ENCODE measurements at regions of chr2 and their contacts with region 1.

Region 1: GRCh38 chr2:229273723-229274338 is 2.7 kb upstream of the PID1 start:
- DNase-seq: peak in 1 of 2 donors; percentile 13
- ATAC-seq: peak; percentile 75 to 81
- H3K4me3 ChIP-seq: peak overlapping the region in 3 of 4 donors; percentile 26 to 42 (median 34)
- H3K27ac ChIP-seq: peak overlapping the region in 1 of 4 donors; percentile 54
- H3K4me1 ChIP-seq: peaks cover 0 to 3% of the 10 kb centered on the region in 2 donors
- H3K27me3 ChIP-seq: no peaks in the 10 kb centered on the region
- CTCF ChIP-seq: peak in 4 of 5 experiments; percentile 18 to 67 (median 48)
- POLR2A ChIP-seq: no peak

Region 2: DNA sequence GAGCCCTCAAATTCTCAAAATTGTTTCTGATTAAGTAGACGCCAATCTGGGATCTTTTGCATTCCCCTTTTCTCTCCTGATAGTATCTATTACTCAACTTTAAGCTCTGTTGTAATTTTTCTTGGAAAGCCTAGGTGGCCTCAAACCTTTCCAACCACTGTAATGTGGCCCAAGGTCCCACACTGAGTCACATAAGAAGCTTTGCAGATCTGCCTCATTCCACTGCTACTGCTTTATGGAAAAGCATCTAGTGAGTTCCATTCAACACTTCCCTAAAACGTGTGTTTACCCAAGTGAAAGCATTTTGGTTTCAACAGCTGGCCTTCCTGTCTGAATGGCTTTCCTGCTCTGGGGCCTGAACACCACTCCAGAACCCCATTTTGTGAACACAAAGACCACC is 598.7 kb before region 1 on chr2:
- in situ Hi-C with region 1: loop called in 1 of 4 experiments (anchors 10 kb)
- intact Hi-C with region 1: no loop called
- DNase-seq: peak; percentile 18 to 41
- ATAC-seq: peak; percentile 74 to 77
- H3K4me3 ChIP-seq: no peak overlapping the region
- H3K27ac ChIP-seq: peak overlapping the region in 3 of 4 donors; percentile 22 to 48 (median 39)
- H3K4me1 ChIP-seq: no peaks in the 10 kb centered on the region
- H3K27me3 ChIP-seq: no peaks in the 10 kb centered on the region
- CTCF ChIP-seq: no peak
- POLR2A ChIP-seq: no peak

Region 3: DNA sequence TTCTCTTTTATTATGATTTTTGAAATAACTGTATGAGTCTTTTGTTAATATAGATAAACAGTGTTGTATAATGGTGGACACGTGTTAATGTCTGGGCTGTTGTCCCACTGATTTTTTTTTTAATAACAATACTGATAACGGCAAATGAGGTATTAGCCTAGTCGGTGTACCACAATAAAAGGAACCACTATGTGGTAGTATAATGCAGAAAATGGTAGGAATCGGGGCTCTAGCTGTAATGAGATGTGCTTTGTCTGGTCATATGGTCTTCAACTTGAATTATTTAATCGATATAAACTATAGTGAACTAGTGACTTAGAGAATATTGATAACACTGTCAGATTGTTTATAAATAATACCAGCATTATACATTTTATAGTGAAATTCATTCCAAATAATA is 574.4 kb before region 1 on chr2:
- in situ Hi-C with region 1: loop called in 1 of 4 experiments (anchors 10 kb)
- intact Hi-C with region 1: loop called (anchors 10 kb)
- DNase-seq: no peak
- ATAC-seq: no peak
- H3K4me3 ChIP-seq: no peak overlapping the region
- H3K27ac ChIP-seq: no peak overlapping the region
- H3K4me1 ChIP-seq: no peaks in the 10 kb centered on the region
- H3K27me3 ChIP-seq: no peaks in the 10 kb centered on the region
- CTCF ChIP-seq: no peak
- POLR2A ChIP-seq: no peak

Region 4: GRCh38 chr2:229133155-229133772 is 140.6 kb before region 1 on chr2:
- in situ Hi-C with region 1: loop called in 2 of 4 experiments (anchors 5 to 10 kb)
- intact Hi-C with region 1: loop called (anchors 1 kb)
- DNase-seq: no peak
- ATAC-seq: peak in 1 of 2 donors; percentile 58
- H3K4me3 ChIP-seq: no peak overlapping the region
- H3K27ac ChIP-seq: no peak overlapping the region
- H3K4me1 ChIP-seq: peaks cover 0 to 5% of the 10 kb centered on the region in 2 donors
- H3K27me3 ChIP-seq: no peaks in the 10 kb centered on the region
- CTCF ChIP-seq: peak in 3 of 5 experiments; percentile 12 to 41 (median 12)
- POLR2A ChIP-seq: no peak

Measured in gastrocnemius medialis (tissue), 4 donors.